ENCODE measurements at regions of chr11 and their contacts with region 1.

Region 1: DNA sequence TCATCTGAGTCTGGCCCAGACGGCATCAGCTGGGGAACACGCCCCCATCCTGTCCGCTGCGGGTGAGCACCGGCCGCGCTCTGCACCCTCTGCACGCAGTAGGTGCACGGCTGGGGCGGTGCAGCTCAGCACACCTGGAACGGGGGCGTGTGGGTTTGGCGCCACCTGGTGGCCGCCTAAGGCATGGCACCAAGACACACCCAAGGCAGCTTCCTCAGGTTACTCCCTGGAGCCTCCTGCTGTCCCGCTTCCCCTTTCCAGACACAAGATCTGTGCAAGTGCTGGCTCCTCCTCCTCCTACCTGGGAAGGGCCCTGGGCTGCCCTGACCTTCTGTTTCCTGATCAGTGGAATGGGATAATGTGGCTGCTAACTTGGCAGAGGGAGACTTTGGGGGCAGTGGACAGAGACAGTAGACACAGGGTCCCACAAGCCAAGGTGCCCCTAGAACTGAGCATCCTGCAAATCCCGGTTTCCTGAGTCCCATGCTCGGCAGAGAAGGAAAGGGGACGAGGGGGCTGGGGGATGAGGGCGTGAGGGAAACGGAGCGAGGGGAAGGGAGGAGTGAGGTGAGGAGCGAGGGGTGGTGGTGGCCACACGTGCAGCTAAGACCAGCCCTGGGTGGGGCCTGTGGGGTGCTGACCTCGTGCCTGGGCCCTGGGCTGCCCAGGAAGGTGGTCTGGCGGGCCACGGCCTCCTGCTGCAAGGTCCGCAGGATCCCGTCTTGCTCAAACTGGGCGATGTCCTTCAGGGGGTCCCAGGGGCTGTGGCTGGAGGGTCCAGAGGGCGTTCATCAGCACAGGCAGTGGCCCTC is 34.8 kb upstream of the CARS1 start:
- DNase-seq: peak; percentile 62
- H3K4me3 ChIP-seq: no peak overlapping the region
- H3K27ac ChIP-seq: no peak overlapping the region
- H3K4me1 ChIP-seq: peaks cover 40% of the 10 kb centered on the region
- H3K27me3 ChIP-seq: no peaks in the 10 kb centered on the region
- CTCF ChIP-seq: peak; percentile 100

Region 2: DNA sequence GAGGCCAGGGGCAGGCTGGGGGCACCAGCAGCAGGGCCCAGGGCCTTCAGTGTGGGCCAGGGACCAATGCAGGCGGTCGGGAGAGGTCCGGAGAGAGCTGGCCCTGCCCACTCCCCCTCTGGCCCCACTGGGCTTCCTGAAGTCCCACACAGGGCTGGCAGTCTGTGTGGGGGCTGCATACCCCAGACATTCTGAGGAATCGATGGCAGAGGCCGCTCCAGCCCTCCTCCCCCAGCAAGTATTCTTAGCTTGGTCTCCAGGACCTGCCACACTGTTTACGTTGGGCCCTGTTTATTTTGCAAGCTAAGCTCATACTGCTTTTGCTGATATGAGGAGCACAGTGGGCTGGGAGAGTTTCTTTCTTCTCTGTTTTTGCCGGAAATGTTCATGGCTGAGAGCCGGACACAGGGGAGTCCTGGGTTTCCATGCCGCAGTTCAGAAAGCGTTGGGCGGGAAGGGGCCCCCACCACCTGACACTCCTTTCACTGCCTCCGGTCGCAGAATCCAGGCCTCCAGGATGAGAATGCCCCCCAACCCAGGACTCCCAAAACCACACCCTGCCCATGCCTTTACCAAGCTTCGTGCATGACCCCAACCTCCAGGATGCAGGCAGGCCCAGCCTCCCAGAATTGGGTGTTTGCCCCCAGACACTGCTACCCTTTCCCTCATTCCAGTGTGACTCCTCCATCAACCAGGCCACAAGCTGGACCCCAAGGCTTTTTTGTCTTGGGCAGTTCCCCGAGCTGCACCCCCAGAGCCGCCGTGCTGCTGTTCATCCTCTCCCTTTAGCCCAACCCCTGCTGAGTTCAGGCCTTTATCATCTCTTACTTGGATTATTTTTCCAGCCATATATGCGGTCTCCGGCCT is 310.4 kb before region 1 on chr11:
- intact Hi-C with region 1: no loop called
- DNase-seq: peak; percentile 7
- H3K4me3 ChIP-seq: no peak overlapping the region
- H3K27ac ChIP-seq: peak overlapping the region; percentile 49
- H3K4me1 ChIP-seq: peaks cover 53% of the 10 kb centered on the region
- H3K27me3 ChIP-seq: no peaks in the 10 kb centered on the region
- CTCF ChIP-seq: no peak

Region 3: DNA sequence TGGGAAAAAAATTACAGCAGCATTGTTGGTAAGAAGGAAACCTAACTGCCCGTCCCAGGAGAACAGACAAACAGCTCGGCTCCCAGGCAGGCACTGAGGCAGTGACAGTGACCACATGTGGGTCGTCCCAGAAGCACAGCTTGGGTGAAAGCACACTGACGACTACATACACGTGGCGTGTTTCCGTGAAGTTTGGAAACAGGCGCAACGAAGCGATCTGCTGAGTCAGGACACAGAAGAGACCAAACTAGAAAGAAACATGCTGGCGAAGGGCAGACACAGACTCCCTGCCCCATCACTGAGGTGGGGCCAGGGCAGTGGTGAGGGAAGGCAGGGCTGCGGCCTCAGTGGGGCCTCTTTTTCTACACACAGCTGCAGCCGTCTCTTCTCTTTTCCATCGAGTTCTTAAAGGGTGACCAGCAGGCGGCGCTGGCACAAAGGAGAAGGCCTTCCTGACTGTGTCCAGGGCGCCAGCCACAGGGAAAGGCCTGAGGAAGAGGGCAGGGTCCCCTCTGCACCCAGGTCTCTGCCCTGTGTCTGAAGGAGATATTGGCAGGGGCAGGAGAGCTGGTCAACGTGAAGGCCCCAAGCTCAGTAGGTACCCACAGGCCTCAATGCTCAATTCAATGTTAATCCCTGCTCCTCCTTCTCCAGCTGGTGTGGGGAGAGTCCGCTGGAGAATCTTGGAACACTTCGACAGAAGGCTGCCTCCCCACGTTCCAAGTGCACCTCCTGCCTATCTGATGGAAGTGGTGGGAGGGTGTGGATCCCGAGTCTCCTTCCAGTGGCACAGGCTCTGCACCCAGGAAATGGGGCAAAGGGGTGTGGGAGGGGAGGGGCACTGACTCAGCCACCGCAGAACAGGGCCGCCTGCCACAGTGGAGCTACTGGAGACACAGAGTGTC is 54.7 kb before region 1 on chr11:
- intact Hi-C with region 1: loop called (anchors 5 kb)
- DNase-seq: peak; percentile 80
- H3K4me3 ChIP-seq: no peak overlapping the region
- H3K27ac ChIP-seq: peak overlapping the region; percentile 26
- H3K4me1 ChIP-seq: peaks cover 33% of the 10 kb centered on the region
- H3K27me3 ChIP-seq: no peaks in the 10 kb centered on the region
- CTCF ChIP-seq: peak; percentile 86

Measured in left ventricle myocardium inferior (tissue), 1 donor.